ENCODE measurements at regions of chr1 and their contacts with region 1.

Region 1: GRCh38 chr1:22416555-22417454 is 34.8 kb upstream of the ZBTB40 start:
- DNase-seq: no peak
- H3K4me3 ChIP-seq: no peak overlapping the region
- H3K27ac ChIP-seq: no peak overlapping the region
- H3K4me1 ChIP-seq: peaks cover 0 to 14% (median 0%) of the 10 kb centered on the region in 3 donors
- H3K27me3 ChIP-seq: peaks cover 0 to 55% (median 0%) of the 10 kb centered on the region in 4 donors
- CTCF ChIP-seq: peak; percentile 46 to 95 (median 86)
- POLR2A ChIP-seq: no peak

Region 2: DNA sequence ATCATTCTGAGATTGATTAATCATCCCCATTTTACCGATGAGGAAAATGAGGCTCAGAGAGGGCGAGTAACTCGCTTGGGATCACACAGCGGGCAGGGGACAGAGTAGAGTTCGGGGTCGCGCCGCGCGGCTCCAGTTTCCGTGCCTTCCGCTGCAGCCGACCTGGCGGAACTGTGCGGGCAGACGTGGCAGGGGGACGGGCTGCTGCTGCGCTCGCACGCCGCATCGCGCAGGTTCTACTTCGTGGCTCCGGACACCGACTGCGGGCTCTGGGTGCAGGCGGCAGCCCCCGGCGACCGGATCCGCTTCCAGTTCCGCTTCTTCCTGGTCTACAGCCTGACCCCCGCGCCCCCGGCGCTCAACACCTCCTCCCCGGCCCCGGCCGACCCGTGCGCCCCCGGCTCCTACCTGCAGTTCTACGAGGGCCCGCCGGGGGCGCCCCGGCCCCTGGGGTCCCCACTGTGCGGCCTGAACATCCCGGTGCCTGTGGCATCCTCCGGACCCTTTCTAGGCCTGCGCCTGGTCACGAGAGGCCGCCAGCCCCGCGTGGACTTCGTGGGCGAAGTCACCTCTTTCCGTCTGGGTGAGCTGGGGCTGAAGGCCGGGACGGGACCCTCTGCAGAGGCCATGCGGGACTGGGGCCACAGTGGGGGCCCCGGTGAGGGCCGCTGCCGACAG is 602.4 kb before region 1 on chr1:
- intact Hi-C with region 1: no loop called
- DNase-seq: no peak
- H3K4me3 ChIP-seq: peak overlapping the region; percentile 15 to 64 (median 34)
- H3K27ac ChIP-seq: no peak overlapping the region
- H3K4me1 ChIP-seq: peaks cover 0 to 19% (median 5%) of the 10 kb centered on the region in 3 donors
- H3K27me3 ChIP-seq: peaks cover 0 to 15% (median 1%) of the 10 kb centered on the region in 4 donors
- CTCF ChIP-seq: peak in 5 of 6 experiments; percentile 28 to 55 (median 52)
- POLR2A ChIP-seq: no peak

Region 3: DNA sequence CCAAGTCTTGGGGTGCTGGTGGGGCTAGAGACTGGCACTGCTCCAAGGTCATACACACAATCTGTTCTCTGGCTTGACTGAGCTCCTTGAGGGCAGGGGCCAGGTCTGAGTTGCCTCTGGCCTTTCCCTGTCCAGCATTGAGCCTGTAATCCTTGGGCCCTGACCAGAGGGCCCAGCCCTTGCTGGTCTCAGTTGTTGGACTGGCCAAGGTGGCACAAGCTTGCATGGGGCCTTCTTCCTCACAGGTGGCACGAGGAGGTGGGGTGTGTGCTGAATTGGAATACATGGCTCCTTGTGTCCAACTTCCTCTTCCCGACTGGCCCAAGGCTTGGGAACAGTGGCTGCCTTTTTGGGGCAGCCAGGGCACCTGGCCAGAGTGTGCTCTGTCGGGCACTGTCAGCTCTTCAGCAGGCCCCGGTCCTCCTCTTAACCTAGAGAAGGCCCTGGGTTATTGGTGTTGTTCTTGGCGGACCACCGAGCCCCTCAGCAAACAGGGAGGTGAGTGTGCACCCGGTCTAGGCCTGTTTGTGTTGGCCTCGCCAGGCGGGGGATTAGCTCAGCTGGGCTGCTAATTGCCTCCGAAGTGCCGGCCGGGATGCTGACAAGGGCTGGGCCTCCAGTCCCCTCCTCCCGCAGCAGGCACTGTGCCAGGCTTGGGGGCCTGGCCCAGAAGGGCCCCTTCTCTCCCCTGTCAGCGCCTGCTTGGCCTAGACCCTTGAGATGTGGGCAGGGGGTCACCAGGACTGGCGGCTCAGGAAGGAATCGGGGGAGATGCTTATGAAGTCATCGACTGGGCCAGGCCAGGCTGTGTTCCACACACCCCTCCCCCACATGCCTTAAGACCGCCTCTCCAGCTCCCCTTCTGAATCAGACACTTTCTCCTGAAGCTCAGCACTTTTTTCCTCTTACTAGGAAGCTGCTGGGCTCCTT is 302.5 kb before region 1 on chr1:
- intact Hi-C with region 1: loop called (anchors 10 kb)
- DNase-seq: no peak
- H3K4me3 ChIP-seq: no peak overlapping the region
- H3K27ac ChIP-seq: peak overlapping the region in 1 of 4 donors; percentile 19
- H3K4me1 ChIP-seq: peaks cover 4 to 80% (median 21%) of the 10 kb centered on the region in 3 donors
- H3K27me3 ChIP-seq: no peaks in the 10 kb centered on the region
- CTCF ChIP-seq: no peak
- POLR2A ChIP-seq: no peak

Region 4: DNA sequence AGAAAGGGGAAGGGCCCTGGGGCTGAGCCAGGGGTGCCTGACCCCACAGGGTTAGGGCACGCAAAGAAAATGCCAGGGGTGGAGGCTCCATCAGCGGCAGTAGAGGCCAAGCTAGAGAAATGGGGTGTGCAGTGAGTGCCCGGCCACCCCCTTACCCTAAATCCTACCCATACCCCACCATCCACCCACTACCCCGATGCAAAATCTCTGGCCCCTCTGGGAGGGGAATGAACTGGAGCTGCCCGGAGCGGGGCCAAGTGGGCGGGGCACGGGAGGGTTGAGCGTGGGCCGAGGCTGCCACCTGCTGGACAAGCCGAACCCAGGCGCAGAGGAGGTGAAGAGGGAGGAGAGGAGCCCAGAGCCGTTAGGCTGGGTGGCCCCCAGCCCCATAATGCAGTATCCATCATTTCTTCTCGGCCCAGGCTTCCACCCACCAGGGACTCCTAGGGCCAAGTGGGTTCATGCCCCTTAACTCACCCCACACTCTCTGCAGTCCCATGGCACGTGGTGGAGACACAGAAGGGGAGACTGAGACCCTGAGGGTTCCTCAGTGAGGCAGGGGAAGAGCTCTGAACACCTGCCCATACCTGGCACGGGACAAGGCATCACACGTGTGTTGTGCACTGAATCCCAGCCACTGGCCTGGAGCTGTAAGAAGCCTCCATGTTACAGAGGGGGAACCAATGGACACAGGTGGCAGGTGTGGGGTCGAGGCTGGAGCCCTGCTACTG is 225.3 kb after region 1 on chr1:
- intact Hi-C with region 1: loop called (anchors 2 kb)
- DNase-seq: no peak
- H3K4me3 ChIP-seq: no peak overlapping the region
- H3K27ac ChIP-seq: no peak overlapping the region
- H3K4me1 ChIP-seq: peaks cover 3 to 9% (median 3%) of the 10 kb centered on the region in 3 donors
- H3K27me3 ChIP-seq: peaks cover 0 to 73% (median 0%) of the 10 kb centered on the region in 4 donors
- CTCF ChIP-seq: peak; percentile 76 to 91 (median 85)
- POLR2A ChIP-seq: no peak